PC-9 (cell line): ENCODE measurements at regions of chr1 and their contacts with region 1.

Region 1: DNA sequence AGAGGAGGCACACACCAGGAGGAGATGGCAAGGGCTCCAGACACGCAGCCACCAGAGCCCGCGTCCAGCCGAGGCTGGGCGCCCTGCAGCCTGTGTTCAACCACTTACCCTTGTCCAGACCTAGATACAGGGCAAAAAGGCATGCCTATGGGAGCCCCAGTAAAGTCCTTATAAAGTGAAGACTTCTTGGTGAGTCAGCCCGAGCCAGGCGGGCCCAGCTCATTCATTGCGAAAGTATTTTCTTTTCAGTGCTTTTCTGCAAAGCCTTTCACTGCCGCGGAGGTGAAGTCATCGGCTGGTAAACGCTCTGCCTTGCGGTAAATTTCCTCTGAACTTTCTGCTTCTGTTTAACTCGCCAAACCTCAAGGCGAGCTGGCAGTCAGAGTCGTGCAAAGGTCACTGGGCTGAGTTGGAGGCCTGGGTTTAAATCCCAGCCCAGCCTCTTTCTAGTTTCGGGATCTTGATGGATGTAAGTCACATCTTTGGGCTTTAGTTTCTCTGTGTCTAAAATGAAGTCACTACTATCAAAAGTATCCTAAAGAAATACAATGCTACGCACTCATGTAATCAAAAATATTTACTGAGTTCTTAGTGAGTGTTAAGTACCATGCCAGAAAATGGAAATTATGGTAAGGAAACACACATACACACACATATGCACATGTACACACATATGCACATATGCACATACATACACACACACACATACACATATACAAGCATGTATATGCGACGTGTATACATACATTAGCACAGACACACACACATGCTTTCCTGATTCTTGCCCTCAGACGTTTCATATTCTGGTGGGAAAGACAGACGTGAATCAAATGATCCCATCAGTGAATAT is 54.7 kb upstream of the IFFO2 start:
- DNase-seq: peak; percentile 89 to 96
- H3K4me3 ChIP-seq: peak overlapping the region; percentile 48; the same call in 1 of the 2 replicates
- H3K27ac ChIP-seq: peak overlapping the region; percentile 99
- H3K4me1 ChIP-seq: peaks cover 75% of the 10 kb centered on the region
- H3K27me3 ChIP-seq: no peaks in the 10 kb centered on the region
- CTCF ChIP-seq: no peak

Region 2: GRCh38 chr1:18902523-18903290 is 108.5 kb before region 1 on chr1 and contains the start of gene ALDH4A1:
- CTCF ChIA-PET with region 1: no interaction called
- POLR2A ChIA-PET with region 1: interaction called, 6 read pairs
- intact Hi-C with region 1: loop called (anchors 1 kb)
- DNase-seq: peak; percentile 94 to 95
- H3K4me3 ChIP-seq: peak within 1 kb of the TSS; percentile 77
- H3K27ac ChIP-seq: peak within 1 kb of the TSS; percentile 91
- H3K4me1 ChIP-seq: peaks cover 20% of the 10 kb centered on the region
- H3K27me3 ChIP-seq: no peaks in the 10 kb centered on the region
- CTCF ChIP-seq: no peak
- total RNA-seq, gene ALDH4A1: 15.0 and 19.4 TPM in 2 replicates

Region 3: DNA sequence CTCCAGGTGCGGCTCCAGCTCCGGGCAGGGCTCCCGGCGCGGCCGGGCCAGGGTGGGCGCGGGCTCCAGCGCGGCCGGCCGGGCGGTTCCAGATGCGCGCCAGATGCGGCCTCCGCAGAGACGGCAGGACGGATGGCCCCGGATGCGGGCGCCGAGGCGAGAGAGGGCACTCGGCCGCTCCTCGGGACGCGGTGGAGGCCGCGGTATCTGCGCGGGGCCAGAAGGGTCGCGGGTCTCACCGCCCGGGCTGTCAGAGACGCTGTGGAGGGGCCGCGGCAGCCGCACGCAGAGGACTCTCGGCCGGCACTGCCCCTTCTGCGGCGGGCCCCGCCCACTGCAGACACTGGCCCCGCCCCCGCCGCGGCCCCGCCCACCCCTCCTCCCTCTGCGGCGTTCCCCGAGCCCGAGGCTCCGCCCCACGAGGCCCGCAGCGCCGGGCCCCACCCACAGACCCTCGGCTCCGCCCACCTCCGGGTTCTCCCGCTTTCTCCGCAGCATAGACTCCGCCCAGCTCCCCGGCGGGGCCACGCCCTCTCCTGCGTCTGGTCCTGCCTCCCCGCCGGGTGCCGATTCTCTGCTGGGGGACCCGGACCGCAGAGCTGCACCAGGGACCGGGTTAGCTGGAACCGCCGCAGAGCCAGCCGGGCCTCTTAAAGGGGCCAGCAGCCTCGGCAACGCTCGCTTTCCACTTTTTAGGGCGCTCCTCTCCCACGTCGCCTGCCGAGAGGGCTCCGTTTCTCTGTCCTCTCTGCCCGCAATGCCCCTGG is 54.7 kb before region 1 on chr1 and contains the start of gene IFFO2:
- CTCF ChIA-PET with region 1: no interaction called
- POLR2A ChIA-PET with region 1: no interaction called
- intact Hi-C with region 1: loop called (anchors 2 kb)
- DNase-seq: peak; percentile 52 to 97
- H3K4me3 ChIP-seq: peak within 1 kb of the TSS; percentile 80
- H3K27ac ChIP-seq: no peak within 1 kb of the TSS
- H3K4me1 ChIP-seq: peaks cover 20% of the 10 kb centered on the region
- H3K27me3 ChIP-seq: no peaks in the 10 kb centered on the region
- CTCF ChIP-seq: no peak
- total RNA-seq, gene IFFO2: 11.7 and 16.5 TPM in 2 replicates

Region 4: DNA sequence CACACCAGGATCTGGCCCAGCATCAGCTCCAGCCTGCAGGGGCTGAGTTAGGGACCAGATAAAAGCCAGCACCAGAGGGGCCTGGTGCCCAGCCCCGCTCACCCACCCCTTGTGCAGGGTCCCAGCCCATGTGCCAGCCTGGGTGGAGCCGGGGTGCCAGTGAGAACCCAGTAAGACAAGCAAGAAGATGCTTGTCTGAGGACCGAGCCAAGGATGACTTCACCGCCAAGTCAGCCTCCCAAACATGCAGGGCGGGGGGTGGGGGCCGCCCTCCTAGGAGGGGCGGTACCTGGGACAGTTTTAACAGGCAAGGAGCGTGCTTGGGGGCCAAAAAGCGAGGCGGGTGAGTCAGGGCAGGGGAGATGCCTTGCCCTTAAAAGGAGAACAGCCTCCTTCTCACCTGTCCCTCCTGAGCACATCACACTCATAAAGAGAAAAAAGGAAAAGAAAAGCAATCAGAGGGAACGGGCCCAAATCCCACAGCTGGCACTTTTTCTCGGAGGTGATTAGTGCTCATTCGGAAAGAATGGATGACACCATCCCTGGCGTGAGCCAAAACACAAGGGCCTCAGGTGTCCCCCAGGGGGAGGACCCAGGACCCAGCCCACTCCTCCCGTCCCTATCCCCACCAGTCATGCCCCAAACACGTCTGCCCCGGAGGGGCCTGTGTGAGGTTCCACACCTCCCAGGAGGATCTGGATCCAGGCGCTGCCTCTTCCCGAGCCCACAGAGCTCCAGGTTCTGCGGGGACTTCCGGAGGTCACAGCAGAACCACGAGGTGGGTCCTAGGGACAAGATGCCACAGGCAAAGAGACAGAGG is 22.9 kb after region 1 on chr1:
- CTCF ChIA-PET with region 1: interaction called, 3 read pairs
- POLR2A ChIA-PET with region 1: interaction called, 3 read pairs
- intact Hi-C with region 1: loop called (anchors 1 kb)
- DNase-seq: peak; percentile 66 to 79
- H3K4me3 ChIP-seq: no peak overlapping the region
- H3K27ac ChIP-seq: no peak overlapping the region
- H3K4me1 ChIP-seq: peaks cover 28% of the 10 kb centered on the region
- H3K27me3 ChIP-seq: no peaks in the 10 kb centered on the region
- CTCF ChIP-seq: no peak

Region 5: GRCh38 chr1:19074902-19075721 is 63.9 kb after region 1 on chr1:
- CTCF ChIA-PET with region 1: interaction called, 3 read pairs
- POLR2A ChIA-PET with region 1: no interaction called
- intact Hi-C with region 1: loop called (anchors 5 kb)
- DNase-seq: no peak
- H3K4me3 ChIP-seq: no peak overlapping the region
- H3K27ac ChIP-seq: no peak overlapping the region
- H3K4me1 ChIP-seq: no peaks in the 10 kb centered on the region
- H3K27me3 ChIP-seq: no peaks in the 10 kb centered on the region
- CTCF ChIP-seq: no peak